CD4-positive, alpha-beta memory T cell (primary cell): ENCODE measurements at regions of chr7 and their contacts with region 1.

Region 1: DNA sequence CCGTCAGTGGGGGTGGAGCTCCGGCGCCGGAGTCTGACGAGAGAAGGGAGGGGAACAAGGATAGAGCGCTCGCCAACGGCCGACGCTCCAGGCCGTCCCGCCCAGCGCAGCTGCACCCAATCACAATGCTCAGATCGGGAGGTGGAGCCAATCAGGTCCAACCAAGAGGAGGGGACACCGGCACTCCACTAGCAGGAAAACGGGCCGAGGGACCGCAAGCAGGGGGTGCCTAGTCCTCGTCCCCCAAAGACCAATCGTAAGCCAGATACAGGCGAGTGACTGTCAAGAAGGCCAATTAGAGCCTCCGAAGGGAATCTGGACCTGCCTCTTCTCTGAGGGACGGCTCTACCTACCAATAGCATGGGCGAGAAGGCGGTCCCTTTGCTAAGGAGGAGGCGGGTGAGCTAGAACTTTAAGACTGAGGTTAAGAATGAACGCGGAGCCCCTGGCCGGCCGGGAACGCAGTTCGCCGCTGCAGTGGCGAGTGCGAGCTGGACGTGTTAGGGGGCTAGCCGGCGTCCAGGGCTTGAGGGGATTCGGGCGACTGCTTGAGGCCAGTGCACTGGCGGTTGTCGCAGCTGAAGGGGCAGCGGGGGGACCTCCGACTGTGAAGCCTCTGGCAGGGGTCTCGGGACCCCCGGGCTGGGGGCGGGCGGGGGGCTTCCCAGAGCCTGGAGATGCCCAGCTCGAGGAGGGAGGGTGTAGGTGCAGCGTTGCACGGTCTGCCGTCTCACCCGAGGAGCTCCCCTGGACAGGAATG is at the start of gene FBXO24:
- DNase-seq: peak; percentile 99 to 100 (median 100)
- H3K4me3 ChIP-seq: peak within 1 kb of the TSS; percentile 77 to 98
- H3K4me3 Mint-ChIP-seq: peak within 1 kb of the TSS; percentile 92 to 99 (median 97)
- H3K27ac ChIP-seq: peak within 1 kb of the TSS; percentile 79
- H3K27ac Mint-ChIP-seq: peak within 1 kb of the TSS; percentile 86 to 99 (median 97)
- H3K4me1 ChIP-seq: peaks cover 38% of the 10 kb centered on the region
- H3K4me1 Mint-ChIP-seq: peaks cover 11 to 27% (median 16%) of the 10 kb centered on the region in 4 donors
- H3K27me3 ChIP-seq: no peaks in the 10 kb centered on the region
- H3K27me3 Mint-ChIP-seq: peaks cover 0 to 2% of the 10 kb centered on the region in 2 donors
- total RNA-seq, gene FBXO24: 1.6 to 2.1 TPM

Region 2: GRCh38 chr7:100478966-100479665 is 107.3 kb before region 1 on chr7 and contains the start of gene TSC22D4:
- CTCF ChIA-PET with region 1: interaction called, 7 read pairs
- POLR2A ChIA-PET with region 1: interaction called, 56 read pairs
- intact Hi-C with region 1: loop called (anchors 1 kb)
- DNase-seq: peak; percentile 93 to 97 (median 95)
- H3K4me3 ChIP-seq: peak within 1 kb of the TSS; percentile 81 to 95
- H3K4me3 Mint-ChIP-seq: peak within 1 kb of the TSS; percentile 82 to 99 (median 98)
- H3K27ac ChIP-seq: peak within 1 kb of the TSS; percentile 75
- H3K27ac Mint-ChIP-seq: peak within 1 kb of the TSS; percentile 75 to 99 (median 94)
- H3K4me1 ChIP-seq: peaks cover 58% of the 10 kb centered on the region
- H3K4me1 Mint-ChIP-seq: peaks cover 28 to 57% (median 38%) of the 10 kb centered on the region in 4 donors
- H3K27me3 ChIP-seq: no peaks in the 10 kb centered on the region
- H3K27me3 Mint-ChIP-seq: no peaks in the 10 kb centered on the region
- total RNA-seq, gene TSC22D4: 144 to 154 TPM

Region 3: GRCh38 chr7:100545360-100546128 is 40.9 kb before region 1 on chr7:
- CTCF ChIA-PET with region 1: interaction called, 13 read pairs
- POLR2A ChIA-PET with region 1: interaction called, 104 read pairs
- intact Hi-C with region 1: no loop called
- DNase-seq: peak in 1 of 5 donors; percentile 84
- H3K4me3 ChIP-seq: peak overlapping the region; percentile 25 to 29
- H3K4me3 Mint-ChIP-seq: peak overlapping the region; percentile 69 to 97 (median 88)
- H3K27ac ChIP-seq: peak overlapping the region; percentile 66
- H3K27ac Mint-ChIP-seq: peak overlapping the region; percentile 61 to 98 (median 91)
- H3K4me1 ChIP-seq: peaks cover 99% of the 10 kb centered on the region
- H3K4me1 Mint-ChIP-seq: peaks cover 76 to 100% (median 89%) of the 10 kb centered on the region in 4 donors
- H3K27me3 ChIP-seq: no peaks in the 10 kb centered on the region
- H3K27me3 Mint-ChIP-seq: no peaks in the 10 kb centered on the region

Region 4: GRCh38 chr7:100575746-100576383 is 10.6 kb before region 1 on chr7:
- CTCF ChIA-PET with region 1: interaction called, 7 read pairs
- POLR2A ChIA-PET with region 1: interaction called, 307 read pairs
- intact Hi-C with region 1: no loop called
- DNase-seq: no peak
- H3K4me3 ChIP-seq: no peak overlapping the region
- H3K4me3 Mint-ChIP-seq: no peak overlapping the region
- H3K27ac ChIP-seq: no peak overlapping the region
- H3K27ac Mint-ChIP-seq: peak overlapping the region in 1 of 7 donors; percentile 13
- H3K4me1 ChIP-seq: peaks cover 10% of the 10 kb centered on the region
- H3K4me1 Mint-ChIP-seq: peaks cover 4 to 28% (median 6%) of the 10 kb centered on the region in 4 donors
- H3K27me3 ChIP-seq: no peaks in the 10 kb centered on the region
- H3K27me3 Mint-ChIP-seq: no peaks in the 10 kb centered on the region

Region 5: DNA sequence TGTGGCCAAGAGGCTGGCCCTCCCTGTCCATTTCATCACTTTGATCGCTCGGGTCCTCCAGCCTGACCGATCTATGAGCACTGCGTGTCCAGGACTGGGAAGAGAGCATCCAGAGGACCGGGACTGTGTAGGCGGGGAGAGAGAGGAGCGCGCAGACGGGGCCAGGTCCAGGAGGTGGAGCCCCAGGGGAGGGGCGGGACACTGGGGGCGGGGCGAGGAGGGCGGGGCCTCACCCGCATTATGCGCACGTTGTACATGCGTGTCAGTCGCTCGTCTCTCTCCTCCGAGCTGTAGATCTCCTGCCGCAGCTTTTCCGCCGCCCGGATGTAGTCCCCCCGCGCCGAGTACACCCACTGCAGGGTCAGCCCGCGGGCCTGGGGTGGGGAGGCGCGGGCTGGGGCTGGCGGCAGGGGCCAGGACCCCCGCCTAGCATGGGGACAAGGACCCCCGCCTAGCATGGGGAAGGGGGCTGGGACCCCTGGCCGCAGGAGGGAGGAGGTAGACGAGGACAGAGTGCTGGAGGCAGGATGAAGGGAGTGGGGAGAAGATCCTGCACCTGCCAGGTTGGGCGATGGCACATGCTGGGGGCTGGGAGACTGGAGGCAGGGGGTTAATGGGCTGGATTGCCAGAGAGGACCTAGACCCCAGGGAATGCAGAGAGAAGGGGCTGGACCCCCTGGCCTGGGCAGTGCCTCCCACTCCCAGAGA is 40.2 kb after region 1 on chr7:
- CTCF ChIA-PET with region 1: interaction called, 3 read pairs
- POLR2A ChIA-PET with region 1: interaction called, 44 read pairs
- intact Hi-C with region 1: loop called (anchors 1 kb)
- DNase-seq: peak; percentile 79 to 91 (median 82)
- H3K4me3 ChIP-seq: peak overlapping the region; percentile 36 to 67
- H3K4me3 Mint-ChIP-seq: peak overlapping the region; percentile 61 to 83 (median 76)
- H3K27ac ChIP-seq: peak overlapping the region; percentile 63
- H3K27ac Mint-ChIP-seq: peak overlapping the region; percentile 45 to 94 (median 83)
- H3K4me1 ChIP-seq: peaks cover 24% of the 10 kb centered on the region
- H3K4me1 Mint-ChIP-seq: peaks cover 15 to 41% (median 28%) of the 10 kb centered on the region in 4 donors
- H3K27me3 ChIP-seq: no peaks in the 10 kb centered on the region
- H3K27me3 Mint-ChIP-seq: no peaks in the 10 kb centered on the region

Region 6: DNA sequence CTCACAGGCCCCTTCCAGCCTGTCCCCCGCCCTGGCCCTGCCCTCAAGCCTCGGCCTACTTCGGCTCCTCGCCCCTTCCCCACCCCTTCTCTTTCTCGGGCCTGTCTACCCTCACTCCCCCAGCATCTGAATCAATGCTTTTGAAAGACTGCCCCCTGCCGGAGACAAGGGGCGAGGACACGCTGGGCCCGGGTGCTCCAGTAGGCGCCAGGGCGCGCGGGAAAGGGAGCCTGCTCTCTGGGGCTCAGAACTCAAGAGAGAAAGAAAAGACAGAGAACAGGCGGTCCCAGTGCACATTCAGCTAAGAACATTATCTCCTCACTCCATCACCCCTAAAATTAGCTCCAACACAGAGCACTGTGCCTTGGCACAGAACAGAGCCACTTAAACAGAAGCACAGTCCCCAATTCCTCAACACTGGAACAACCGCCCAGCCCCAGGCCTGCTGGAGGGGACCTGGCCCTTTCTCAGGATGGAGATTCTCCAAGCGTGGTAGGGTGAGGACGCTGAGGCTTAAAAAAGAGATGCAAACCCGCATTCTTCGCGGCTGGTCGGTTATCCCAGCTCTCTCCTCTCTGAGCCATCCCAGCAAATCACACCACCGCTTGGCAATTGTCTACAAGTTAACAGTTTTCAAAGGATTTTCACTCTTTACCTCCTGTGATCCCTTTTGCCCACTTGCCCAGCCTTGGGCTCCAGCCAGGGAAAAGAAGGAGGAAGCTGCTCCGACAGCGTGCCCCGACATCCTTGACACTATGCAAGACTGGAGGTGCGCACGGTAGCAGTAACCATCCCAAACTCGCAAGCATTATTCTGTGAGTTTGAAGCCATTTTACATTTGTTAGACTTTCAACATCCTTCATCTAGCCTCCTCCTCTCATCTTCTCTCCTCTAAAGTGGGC is 105.5 kb after region 1 on chr7:
- CTCF ChIA-PET with region 1: interaction called, 36 read pairs
- POLR2A ChIA-PET with region 1: interaction called, 53 read pairs
- intact Hi-C with region 1: no loop called
- DNase-seq: peak; percentile 73 to 80 (median 78)
- H3K4me3 ChIP-seq: peak overlapping the region in 1 of 2 donors; percentile 7
- H3K4me3 Mint-ChIP-seq: peak overlapping the region; percentile 88 to 96 (median 92)
- H3K27ac ChIP-seq: no peak overlapping the region
- H3K27ac Mint-ChIP-seq: peak overlapping the region; percentile 36 to 93 (median 79)
- H3K4me1 ChIP-seq: peaks cover 40% of the 10 kb centered on the region
- H3K4me1 Mint-ChIP-seq: peaks cover 23 to 51% (median 36%) of the 10 kb centered on the region in 4 donors
- H3K27me3 ChIP-seq: no peaks in the 10 kb centered on the region
- H3K27me3 Mint-ChIP-seq: no peaks in the 10 kb centered on the region

Region 7: GRCh38 chr7:100736671-100737070 is 150.2 kb after region 1 on chr7:
- CTCF ChIA-PET with region 1: no interaction called
- POLR2A ChIA-PET with region 1: no interaction called
- intact Hi-C with region 1: no loop called
- DNase-seq: no peak
- H3K4me3 ChIP-seq: no peak overlapping the region
- H3K4me3 Mint-ChIP-seq: no peak overlapping the region
- H3K27ac ChIP-seq: no peak overlapping the region
- H3K27ac Mint-ChIP-seq: no peak overlapping the region
- H3K4me1 ChIP-seq: no peaks in the 10 kb centered on the region
- H3K4me1 Mint-ChIP-seq: peaks cover 0 to 2% (median 0%) of the 10 kb centered on the region in 4 donors
- H3K27me3 ChIP-seq: no peaks in the 10 kb centered on the region
- H3K27me3 Mint-ChIP-seq: peaks cover 3 to 16% of the 10 kb centered on the region in 2 donors